Pancreas (tissue), 10 donors: ENCODE measurements at regions of chr10 and their contacts with region 1.

Region 1: DNA sequence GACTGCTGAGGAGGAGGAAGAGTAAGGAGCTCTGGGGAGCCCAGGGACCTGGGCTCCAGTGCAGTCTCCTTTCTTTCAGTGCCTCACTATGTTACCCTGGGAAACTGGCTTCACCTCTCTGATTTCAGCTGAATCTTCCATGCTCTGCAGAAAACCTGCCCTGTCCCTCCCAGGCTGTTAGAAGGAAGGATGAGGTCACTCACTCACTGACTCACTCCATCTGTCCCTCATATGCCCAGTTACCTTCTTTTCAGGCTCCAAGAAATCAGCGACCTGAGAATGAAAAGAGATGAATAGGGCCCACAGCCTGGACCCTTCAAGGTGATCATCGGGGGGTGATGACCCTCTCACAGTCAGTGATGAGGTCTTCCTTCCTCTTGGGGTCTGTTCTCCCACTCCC is 481 bp downstream of the SFTPA2 start:
- DNase-seq: no peak
- ATAC-seq: peak in 3 of 4 donors; percentile 33 to 65 (median 42)
- H3K4me3 ChIP-seq: no peak overlapping the region
- H3K27ac ChIP-seq: no peak overlapping the region
- H3K4me1 ChIP-seq: peaks cover 0 to 15% (median 9%) of the 10 kb centered on the region in 3 donors
- H3K27me3 ChIP-seq: no peaks in the 10 kb centered on the region
- CTCF ChIP-seq: no peak

Region 2: DNA sequence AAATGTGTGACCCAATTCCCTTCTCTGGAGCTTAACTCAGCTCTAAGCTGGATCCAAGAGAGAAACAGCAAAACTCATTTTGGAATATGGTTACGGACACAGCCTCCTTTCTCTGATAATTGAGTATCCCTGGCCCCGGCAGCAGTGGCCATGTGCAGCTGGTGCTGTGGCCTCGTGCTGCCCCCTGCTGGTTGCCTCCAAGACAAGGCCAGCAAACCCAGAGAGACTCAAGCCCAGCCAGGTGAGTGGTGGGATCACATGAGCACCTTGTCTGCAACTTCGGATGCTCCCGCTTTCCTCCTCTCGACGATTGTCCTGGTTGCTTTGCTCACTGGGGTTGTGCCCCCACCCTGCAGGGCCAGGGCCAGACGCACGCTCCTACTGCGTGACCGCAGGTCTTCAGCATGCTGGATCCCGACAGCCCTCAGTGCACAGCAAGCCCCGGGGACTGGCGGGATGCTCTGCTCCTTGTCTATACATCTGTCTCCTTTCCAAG is 369.7 kb after region 1 on chr10:
- intact Hi-C with region 1: loop called in 1 of 3 experiments (anchors 10 kb)
- DNase-seq: peak; percentile 67 to 92 (median 86)
- ATAC-seq: peak; percentile 91 to 95 (median 94)
- H3K4me3 ChIP-seq: no peak overlapping the region
- H3K27ac ChIP-seq: no peak overlapping the region
- H3K4me1 ChIP-seq: no peaks in the 10 kb centered on the region
- H3K27me3 ChIP-seq: no peaks in the 10 kb centered on the region
- CTCF ChIP-seq: peak; percentile 76 to 92 (median 88)